Uterus (tissue), 4 donors: ENCODE measurements at regions of chr9 and their contacts with region 1.

Region 1: GRCh38 chr9:30519756-30520155 is 1864.7 kb upstream of the ACO1 start:
- DNase-seq: no peak
- H3K4me3 ChIP-seq: no peak overlapping the region
- H3K27ac ChIP-seq: no peak overlapping the region
- H3K4me1 ChIP-seq: no peaks in the 10 kb centered on the region
- H3K27me3 ChIP-seq: no peaks in the 10 kb centered on the region
- CTCF ChIP-seq: no peak
- POLR2A ChIP-seq: no peak

Region 2: DNA sequence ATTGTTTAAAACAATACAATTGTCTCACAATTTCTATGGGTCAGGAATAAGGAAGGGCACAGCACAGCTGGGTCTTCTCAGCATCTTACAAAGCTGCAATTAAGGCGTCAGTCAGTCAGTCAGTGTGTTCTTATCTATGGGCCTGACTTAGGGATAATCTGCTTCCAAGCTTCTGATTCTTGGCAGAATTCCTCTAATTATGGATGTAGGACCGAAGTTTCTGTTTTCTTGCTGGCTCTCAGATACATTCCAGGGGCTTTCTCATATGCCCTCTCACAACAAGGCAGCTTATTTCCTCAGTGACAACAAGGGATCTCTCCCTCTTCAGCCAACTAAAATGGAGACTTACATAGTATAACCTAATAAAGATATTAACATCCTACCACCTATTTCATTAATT is 60.6 kb before region 1 on chr9:
- intact Hi-C with region 1: loop called (anchors 10 kb)
- DNase-seq: no peak
- H3K4me3 ChIP-seq: no peak overlapping the region
- H3K27ac ChIP-seq: no peak overlapping the region
- H3K4me1 ChIP-seq: no peaks in the 10 kb centered on the region
- H3K27me3 ChIP-seq: no peaks in the 10 kb centered on the region
- CTCF ChIP-seq: no peak
- POLR2A ChIP-seq: no peak

Region 3: GRCh38 chr9:30591461-30591860 is 71.7 kb after region 1 on chr9:
- intact Hi-C with region 1: no loop called
- DNase-seq: no peak
- H3K4me3 ChIP-seq: no peak overlapping the region
- H3K27ac ChIP-seq: no peak overlapping the region
- H3K4me1 ChIP-seq: no peaks in the 10 kb centered on the region
- H3K27me3 ChIP-seq: no peaks in the 10 kb centered on the region
- CTCF ChIP-seq: no peak
- POLR2A ChIP-seq: no peak